Aorta (tissue), 5 donors: ENCODE measurements at regions of chr7 and their contacts with region 1.

Region 1: DNA sequence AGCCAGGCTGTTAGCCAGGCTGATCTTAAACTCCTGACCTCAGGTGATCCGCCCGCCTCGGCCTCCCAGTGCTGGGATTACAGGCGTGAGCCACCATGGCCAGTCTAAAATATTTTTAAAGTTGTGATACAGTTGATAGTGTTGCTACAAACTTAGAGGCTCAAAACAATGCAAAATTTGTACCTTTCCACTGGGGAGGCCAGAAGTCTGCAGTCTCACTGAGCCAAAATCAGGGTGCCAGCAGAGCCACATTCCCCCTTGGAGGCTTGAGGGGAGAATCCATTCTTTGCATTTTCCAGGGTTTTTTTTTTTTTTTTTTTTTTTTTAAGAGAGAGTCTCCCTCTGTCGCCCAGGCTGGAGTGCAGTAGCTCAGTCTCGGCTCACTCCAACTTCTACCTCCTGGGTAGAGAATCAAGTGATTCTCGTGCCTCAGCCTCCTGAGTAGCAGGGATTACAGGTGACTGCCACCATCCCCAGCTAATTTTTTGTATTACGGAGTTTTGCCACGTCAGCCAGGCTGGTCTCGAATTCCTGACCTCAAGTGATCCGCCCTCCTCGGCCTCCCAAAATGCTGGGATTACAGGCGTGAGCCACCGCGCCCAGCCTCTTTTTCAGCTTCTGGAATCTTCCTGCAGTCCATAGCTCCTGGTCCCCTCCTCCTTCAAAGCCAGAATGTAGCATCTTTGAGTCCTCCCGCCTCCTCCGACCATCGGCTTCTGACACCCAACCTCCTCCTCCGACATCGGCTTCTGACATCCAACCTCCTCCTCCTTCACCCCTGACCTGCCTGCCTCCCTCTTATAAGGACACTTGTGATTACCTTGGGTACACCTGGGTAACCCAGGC is 37.2 kb downstream of the KLRG2 start:
- DNase-seq: no peak
- ATAC-seq: no peak
- H3K4me3 ChIP-seq: no peak overlapping the region
- H3K27ac ChIP-seq: no peak overlapping the region
- H3K4me1 ChIP-seq: no peaks in the 10 kb centered on the region
- H3K27me3 ChIP-seq: no peaks in the 10 kb centered on the region

Region 2: DNA sequence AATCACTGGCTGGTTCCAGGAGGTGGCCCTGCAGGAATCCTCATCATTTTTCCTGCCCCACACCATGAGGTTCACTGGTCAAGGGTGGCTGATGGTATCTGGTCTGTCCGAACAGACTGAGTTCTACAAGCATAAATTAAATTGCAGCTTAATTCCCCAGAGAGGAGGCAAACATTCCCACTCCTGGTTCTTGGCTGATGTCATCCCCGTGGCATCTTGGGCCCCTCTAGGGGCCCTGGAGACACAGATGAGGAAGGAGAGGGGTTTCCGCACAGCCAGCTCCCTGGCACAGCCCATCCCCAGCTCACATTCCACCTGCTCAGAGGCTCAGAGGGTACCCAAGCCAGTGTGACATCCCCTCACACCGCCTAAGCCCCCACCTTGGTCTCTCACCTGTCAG is 42.6 kb after region 1 on chr7:
- intact Hi-C with region 1: loop called in 1 of 2 experiments (anchors 5 kb)
- DNase-seq: no peak
- ATAC-seq: no peak
- H3K4me3 ChIP-seq: no peak overlapping the region
- H3K27ac ChIP-seq: no peak overlapping the region
- H3K4me1 ChIP-seq: no peaks in the 10 kb centered on the region
- H3K27me3 ChIP-seq: no peaks in the 10 kb centered on the region